Breast epithelium (tissue), 4 donors: ENCODE measurements at regions of chr14 and their contacts with region 1.

Region 1: DNA sequence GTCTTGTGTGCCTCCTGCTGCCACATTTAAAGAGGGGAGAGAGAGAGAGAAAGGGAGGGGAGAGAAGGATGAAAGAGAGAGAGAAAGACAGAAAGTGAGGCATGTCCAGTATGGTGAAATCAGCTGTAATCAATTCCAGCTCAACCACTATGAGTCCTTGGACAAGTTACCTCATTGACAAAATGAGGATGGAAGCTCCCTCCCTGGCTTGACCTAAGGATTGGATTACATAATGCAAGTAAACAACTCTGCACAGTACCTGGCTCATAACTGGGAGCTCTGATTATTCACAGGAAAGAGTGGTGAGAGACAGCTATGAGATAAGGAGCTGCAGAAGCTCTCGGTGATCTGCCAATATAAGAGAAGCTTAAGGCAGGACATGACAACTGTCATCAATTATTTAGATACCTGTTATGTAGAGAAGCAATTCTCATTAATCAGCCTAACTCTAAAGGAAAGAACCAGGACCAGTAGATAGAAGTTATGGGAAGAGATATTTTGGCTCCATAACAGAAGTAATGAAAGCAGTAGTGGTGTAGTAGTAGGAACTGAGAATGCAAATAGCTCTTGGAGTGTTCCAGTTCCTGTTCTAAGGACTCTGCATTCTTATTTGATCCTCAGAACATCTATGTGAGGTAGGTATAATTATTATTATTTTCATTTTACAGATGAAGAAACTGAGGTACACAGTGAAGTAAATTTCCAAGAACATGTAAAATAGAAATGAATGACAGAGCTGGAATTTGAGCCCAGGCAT is 791.6 kb downstream of the DIO2 start:
- DNase-seq: no peak
- H3K4me3 ChIP-seq: no peak overlapping the region
- H3K27ac ChIP-seq: no peak overlapping the region
- H3K4me1 ChIP-seq: no peaks in the 10 kb centered on the region
- H3K27me3 ChIP-seq: no peaks in the 10 kb centered on the region
- CTCF ChIP-seq: no peak
- POLR2A ChIP-seq: no peak

Region 2: DNA sequence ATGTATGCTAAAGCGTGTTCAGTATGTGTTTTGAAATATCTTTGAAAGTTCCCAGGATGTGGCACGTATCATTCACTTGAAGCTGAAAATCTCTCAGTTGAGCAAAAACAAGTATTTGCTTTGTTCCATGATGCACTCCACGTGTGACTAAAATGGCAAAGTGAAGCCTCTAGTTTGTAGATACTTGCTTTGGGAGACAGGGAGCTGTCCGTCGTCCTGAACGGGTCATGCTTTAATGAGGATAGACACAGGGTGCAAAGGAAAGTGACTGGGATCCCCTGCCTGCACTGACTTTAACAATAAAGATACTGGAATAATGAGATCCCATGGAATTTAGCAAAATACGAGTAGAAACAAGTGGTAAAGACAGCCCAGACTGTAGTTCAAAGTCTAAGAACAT is 258.2 kb before region 1 on chr14:
- intact Hi-C with region 1: loop called (anchors 10 kb)
- DNase-seq: no peak
- H3K4me3 ChIP-seq: no peak overlapping the region
- H3K27ac ChIP-seq: no peak overlapping the region
- H3K4me1 ChIP-seq: no peaks in the 10 kb centered on the region
- H3K27me3 ChIP-seq: no peaks in the 10 kb centered on the region
- CTCF ChIP-seq: no peak
- POLR2A ChIP-seq: no peak

Region 3: GRCh38 chr14:79442786-79443185 is 23.0 kb after region 1 on chr14:
- intact Hi-C with region 1: no loop called
- DNase-seq: no peak
- H3K4me3 ChIP-seq: no peak overlapping the region
- H3K27ac ChIP-seq: no peak overlapping the region
- H3K4me1 ChIP-seq: no peaks in the 10 kb centered on the region
- H3K27me3 ChIP-seq: no peaks in the 10 kb centered on the region
- CTCF ChIP-seq: no peak
- POLR2A ChIP-seq: no peak

Region 4: GRCh38 chr14:79453276-79453675 is 33.5 kb after region 1 on chr14:
- intact Hi-C with region 1: no loop called
- DNase-seq: no peak
- H3K4me3 ChIP-seq: no peak overlapping the region
- H3K27ac ChIP-seq: no peak overlapping the region
- H3K4me1 ChIP-seq: no peaks in the 10 kb centered on the region
- H3K27me3 ChIP-seq: no peaks in the 10 kb centered on the region
- CTCF ChIP-seq: no peak
- POLR2A ChIP-seq: no peak